ENCODE measurements at regions of chr2 and their contacts with region 1.

Region 1: DNA sequence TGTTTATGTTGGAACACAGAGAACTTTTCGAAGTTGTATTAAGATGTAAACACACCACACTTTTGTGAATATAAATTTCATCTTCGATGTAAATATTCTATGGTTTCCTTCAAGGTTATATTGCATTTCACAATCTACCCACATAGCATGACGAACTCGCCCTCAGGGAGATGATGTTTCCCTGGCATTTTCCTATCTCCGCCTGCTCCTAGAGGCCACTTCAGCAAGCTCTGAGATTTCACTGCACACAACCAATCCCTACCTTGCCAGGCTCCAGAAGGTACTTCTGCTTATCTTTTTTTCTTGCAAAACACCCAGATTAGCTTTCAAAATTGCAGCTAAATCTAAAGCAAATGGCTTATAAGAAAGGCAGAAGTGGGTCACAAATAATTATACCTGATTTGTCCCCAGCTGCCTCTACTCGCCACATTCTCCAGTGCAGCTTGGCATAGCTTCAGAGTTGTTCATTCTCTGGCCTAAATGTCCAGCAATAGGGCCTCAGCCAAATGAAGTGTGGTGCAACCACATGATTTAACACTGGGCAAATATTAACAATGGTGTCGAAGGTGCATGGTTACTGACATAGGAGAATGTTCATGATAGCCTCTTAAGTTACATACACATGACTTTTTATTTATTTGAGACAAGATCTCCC is 32.4 kb upstream of the MRPL19 start:
- DNase-seq: no peak
- ATAC-seq: no peak

Region 2: DNA sequence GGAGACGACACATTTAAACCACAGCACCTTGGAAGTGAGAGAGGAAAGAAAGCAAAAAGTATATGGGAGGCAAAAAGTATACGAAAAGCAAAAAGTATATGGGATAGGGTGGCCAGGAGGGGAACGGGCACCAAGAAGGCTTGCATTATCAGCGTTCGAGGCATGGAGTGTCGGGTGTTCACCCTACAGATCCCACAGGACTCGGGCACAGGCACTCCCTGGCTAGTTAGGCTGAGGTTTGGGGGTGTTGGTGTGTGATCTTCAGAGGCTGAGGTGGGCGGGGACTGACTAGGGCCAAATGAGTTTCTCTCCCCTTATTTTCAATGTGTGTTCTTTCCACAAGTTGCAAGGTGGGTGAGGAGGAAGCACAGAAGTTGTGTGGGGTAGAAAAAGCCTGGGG is 140.1 kb before region 1 on chr2:
- intact Hi-C with region 1: loop called (anchors 5 kb)
- DNase-seq: no peak
- ATAC-seq: no peak

Region 3: GRCh38 chr2:75667884-75668283 is 53.7 kb after region 1 on chr2:
- intact Hi-C with region 1: no loop called
- DNase-seq: no peak
- ATAC-seq: no peak